K562 (cell line): ENCODE measurements at regions of chr2 and their contacts with region 1.

Region 1: DNA sequence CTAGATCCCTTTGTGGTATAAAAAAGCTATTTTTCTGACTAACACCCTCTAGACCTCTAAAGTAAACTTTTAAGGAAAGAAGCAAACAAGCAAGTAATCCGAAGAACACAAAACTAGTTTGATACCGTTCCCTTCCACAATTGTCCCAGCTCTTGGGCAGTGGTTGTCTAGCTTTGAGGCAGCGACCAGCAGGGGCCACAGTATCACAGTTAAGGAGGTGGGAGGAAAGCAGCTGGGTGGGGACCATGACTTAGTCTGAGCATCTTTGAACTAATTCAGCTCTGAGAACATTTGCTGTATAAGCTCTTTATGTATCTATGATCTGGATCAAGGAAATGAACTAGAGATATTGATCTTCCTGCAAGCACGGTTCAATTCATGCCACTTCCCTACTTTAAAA is 51.0 kb downstream of the SF3B1 start:
- DNase-seq: peak in 2 of 4 experiments; percentile 8 to 18
- ATAC-seq: peak; percentile 81
- H3K4me3 ChIP-seq: no peak overlapping the region
- H3K27ac ChIP-seq: no peak overlapping the region
- H3K4me1 ChIP-seq: no peaks in the 10 kb centered on the region; a peak in 1 of 5 replicates
- H3K27me3 ChIP-seq: peaks cover 5 to 15% of the 10 kb centered on the region in 2 experiments; a peak in 3 of 5 replicates
- CTCF ChIP-seq: peak in 2 of 3 experiments; percentile 11 to 23; a peak in 3 of 6 replicates
- EP300 ChIP-seq: no peak
- POLR2A ChIP-seq: no peak
- RAD21 ChIP-seq: peak in 1 of 2 experiments; percentile 38; a peak in 2 of 4 replicates

Region 2: DNA sequence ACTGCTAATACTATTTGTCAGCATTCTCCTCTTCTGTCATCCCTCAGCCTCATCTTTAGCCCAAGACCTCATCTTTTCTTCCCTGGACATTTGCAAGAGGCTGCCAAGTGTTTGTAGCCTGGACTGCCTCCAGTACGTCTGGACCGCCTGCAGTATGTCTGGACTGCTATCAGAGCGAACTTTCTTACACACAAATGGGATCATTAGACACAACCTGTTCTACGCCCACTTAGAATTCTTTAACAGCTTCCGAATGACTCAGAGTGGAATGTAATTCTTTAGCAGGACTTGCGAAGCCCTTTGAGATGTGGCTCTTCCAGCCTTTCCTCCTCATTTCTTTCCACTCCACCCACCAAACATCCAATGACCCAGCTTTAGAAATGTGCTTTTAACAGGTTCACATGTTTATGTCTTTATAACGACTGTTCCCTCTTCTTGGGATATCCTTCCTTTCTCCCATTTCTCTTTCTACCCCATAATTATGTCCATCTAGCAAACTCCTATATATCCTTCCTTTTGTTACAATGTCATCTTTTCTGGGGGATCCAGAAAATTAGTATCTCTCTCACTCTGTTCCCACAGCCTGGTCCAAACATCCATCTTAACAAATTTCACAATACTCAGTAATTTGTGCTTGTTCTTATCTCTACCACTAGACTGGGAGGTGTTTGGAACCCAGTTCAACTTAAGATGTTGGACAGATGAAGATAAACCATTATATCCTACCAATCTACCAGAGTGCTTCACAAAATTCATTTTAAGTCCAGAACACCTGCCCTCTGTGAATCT is 286.1 kb before region 1 on chr2:
- CTCF ChIA-PET with region 1: no interaction called
- POLR2A ChIA-PET with region 1: no interaction called
- in situ Hi-C with region 1: no loop called
- intact Hi-C with region 1: no loop called
- DNase-seq: no peak
- ATAC-seq: no peak
- H3K4me3 ChIP-seq: no peak overlapping the region
- H3K27ac ChIP-seq: no peak overlapping the region
- H3K4me1 ChIP-seq: no peaks in the 10 kb centered on the region
- H3K27me3 ChIP-seq: peaks cover 0 to 3% of the 10 kb centered on the region in 2 experiments; a peak in 2 of 5 replicates
- CTCF ChIP-seq: no peak
- EP300 ChIP-seq: no peak
- POLR2A ChIP-seq: no peak
- RAD21 ChIP-seq: no peak

Region 3: GRCh38 chr2:197113275-197113711 is 270.5 kb before region 1 on chr2:
- CTCF ChIA-PET with region 1: interaction called, 5 read pairs
- POLR2A ChIA-PET with region 1: no interaction called
- in situ Hi-C with region 1: loop called (anchors 10 kb)
- intact Hi-C with region 1: no loop called
- DNase-seq: peak; percentile 7 to 11 (median 9)
- ATAC-seq: no peak
- H3K4me3 ChIP-seq: no peak overlapping the region
- H3K27ac ChIP-seq: no peak overlapping the region
- H3K4me1 ChIP-seq: no peaks in the 10 kb centered on the region
- H3K27me3 ChIP-seq: no peaks in the 10 kb centered on the region
- CTCF ChIP-seq: peak in 2 of 3 experiments; percentile 24 to 65; a peak in 4 of 6 replicates
- EP300 ChIP-seq: no peak
- POLR2A ChIP-seq: no peak
- RAD21 ChIP-seq: peak; percentile 53 to 62

Region 4: GRCh38 chr2:197184959-197185586 is 198.8 kb before region 1 on chr2:
- CTCF ChIA-PET with region 1: no interaction called
- POLR2A ChIA-PET with region 1: no interaction called
- in situ Hi-C with region 1: loop called (anchors 5 kb)
- intact Hi-C with region 1: no loop called
- DNase-seq: no peak
- ATAC-seq: no peak
- H3K4me3 ChIP-seq: no peak overlapping the region
- H3K27ac ChIP-seq: no peak overlapping the region
- H3K4me1 ChIP-seq: no peaks in the 10 kb centered on the region
- H3K27me3 ChIP-seq: no peaks in the 10 kb centered on the region
- CTCF ChIP-seq: no peak
- EP300 ChIP-seq: no peak
- POLR2A ChIP-seq: no peak
- RAD21 ChIP-seq: no peak

Region 5: DNA sequence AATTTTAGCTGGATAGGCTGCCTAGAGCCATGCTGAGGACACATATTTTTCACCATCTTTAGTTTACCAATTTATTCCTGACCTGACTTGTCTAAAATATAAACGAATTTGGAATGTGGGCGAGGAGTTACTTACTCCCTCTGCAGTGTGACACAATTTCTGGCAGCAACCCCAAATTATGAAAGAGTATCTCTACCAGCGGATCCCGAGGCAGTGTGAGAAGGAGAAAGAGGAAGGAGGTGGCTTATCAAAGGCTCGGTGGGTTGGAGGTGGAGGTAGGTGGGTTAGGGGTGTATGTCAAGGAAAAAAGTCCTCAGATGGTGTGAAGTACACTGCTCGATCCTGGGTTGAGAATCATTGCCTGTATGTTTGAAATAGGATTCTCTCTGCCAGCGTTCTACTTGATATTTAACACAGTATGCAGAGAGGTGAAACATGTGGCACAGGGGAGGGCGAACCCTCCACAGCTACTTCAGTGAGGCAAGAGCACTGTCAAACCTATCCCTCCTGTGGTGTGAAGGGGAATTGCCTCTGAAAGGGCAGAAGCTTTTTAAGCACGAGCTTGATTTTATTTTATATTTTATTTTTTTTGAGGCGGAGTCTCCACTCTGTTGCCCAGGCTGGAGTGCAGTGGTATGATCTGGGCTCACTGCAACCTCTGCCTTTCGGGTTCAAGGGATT is 215.6 kb after region 1 on chr2:
- CTCF ChIA-PET with region 1: no interaction called
- POLR2A ChIA-PET with region 1: no interaction called
- in situ Hi-C with region 1: no loop called
- intact Hi-C with region 1: loop called (anchors 10 kb)
- DNase-seq: peak; percentile 12 to 58 (median 32)
- ATAC-seq: peak; percentile 97
- H3K4me3 ChIP-seq: no peak overlapping the region
- H3K27ac ChIP-seq: no peak overlapping the region
- H3K4me1 ChIP-seq: peaks cover 0 to 5% of the 10 kb centered on the region in 2 experiments; a peak in 1 of 5 replicates
- H3K27me3 ChIP-seq: no peaks in the 10 kb centered on the region; a peak in 1 of 5 replicates
- CTCF ChIP-seq: peak; percentile 15 to 44 (median 42); a peak in 4 of 6 replicates
- EP300 ChIP-seq: no peak
- POLR2A ChIP-seq: no peak
- RAD21 ChIP-seq: peak in 1 of 2 experiments; percentile 34; a peak in 1 of 4 replicates